ENCODE measurements at regions of chr1 and their contacts with region 1.

Region 1: GRCh38 chr1:66331657-66332547 is 202.1 kb upstream of the SGIP1 start:
- DNase-seq: no peak
- ATAC-seq: peak; percentile 13
- H3K4me3 ChIP-seq: peak overlapping the region; percentile 81
- H3K27ac ChIP-seq: peak overlapping the region; percentile 93
- H3K4me1 ChIP-seq: peaks cover 49% of the 10 kb centered on the region
- H3K27me3 ChIP-seq: no peaks in the 10 kb centered on the region
- CTCF ChIP-seq: no peak
- EP300 ChIP-seq: peak in 1 of 2 experiments; percentile 41; a peak in 1 of 4 replicates
- POLR2A ChIP-seq: peak; percentile 48; the same call in 1 of the 2 replicates
- RAD21 ChIP-seq: no peak

Region 2: GRCh38 chr1:66271216-66271903 is 60.5 kb before region 1 on chr1:
- CTCF ChIA-PET with region 1: interaction called, 9 read pairs
- POLR2A ChIA-PET with region 1: interaction called, 3 read pairs
- RAD21 ChIA-PET with region 1: interaction called, 4 read pairs
- SMC1A ChIA-PET with region 1: interaction called, 290 read pairs
- in situ Hi-C with region 1: no loop called
- intact Hi-C with region 1: loop called (anchors 1 kb)
- DNase-seq: no peak
- ATAC-seq: peak; percentile 58
- H3K4me3 ChIP-seq: no peak overlapping the region
- H3K27ac ChIP-seq: no peak overlapping the region
- H3K4me1 ChIP-seq: peaks cover 21% of the 10 kb centered on the region
- H3K27me3 ChIP-seq: no peaks in the 10 kb centered on the region
- CTCF ChIP-seq: no peak
- EP300 ChIP-seq: peak; percentile 38 to 77; a peak in 1 of 4 replicates
- POLR2A ChIP-seq: no peak
- RAD21 ChIP-seq: no peak

Region 3: GRCh38 chr1:66291047-66291868 is 40.6 kb before region 1 on chr1:
- CTCF ChIA-PET with region 1: interaction called, 6 read pairs
- POLR2A ChIA-PET with region 1: no interaction called
- RAD21 ChIA-PET with region 1: interaction called, 19 read pairs
- SMC1A ChIA-PET with region 1: interaction called, 290 read pairs
- in situ Hi-C with region 1: no loop called
- intact Hi-C with region 1: no loop called
- DNase-seq: no peak
- ATAC-seq: peak; percentile 49
- H3K4me3 ChIP-seq: no peak overlapping the region
- H3K27ac ChIP-seq: no peak overlapping the region
- H3K4me1 ChIP-seq: no peaks in the 10 kb centered on the region
- H3K27me3 ChIP-seq: no peaks in the 10 kb centered on the region
- CTCF ChIP-seq: no peak
- EP300 ChIP-seq: no peak
- POLR2A ChIP-seq: no peak
- RAD21 ChIP-seq: no peak

Region 4: GRCh38 chr1:66300972-66301451 is 30.9 kb before region 1 on chr1:
- CTCF ChIA-PET with region 1: interaction called, 6 read pairs
- POLR2A ChIA-PET with region 1: interaction called, 5 read pairs
- RAD21 ChIA-PET with region 1: interaction called, 10 read pairs
- SMC1A ChIA-PET with region 1: interaction called, 35 read pairs
- in situ Hi-C with region 1: no loop called
- intact Hi-C with region 1: no loop called
- DNase-seq: peak; percentile 53
- ATAC-seq: peak; percentile 92
- H3K4me3 ChIP-seq: peak overlapping the region; percentile 56; the same call in 1 of the 2 replicates
- H3K27ac ChIP-seq: peak overlapping the region; percentile 63
- H3K4me1 ChIP-seq: peaks cover 22% of the 10 kb centered on the region; the same call in 1 of the 2 replicates
- H3K27me3 ChIP-seq: no peaks in the 10 kb centered on the region
- CTCF ChIP-seq: no peak
- EP300 ChIP-seq: no peak
- POLR2A ChIP-seq: no peak
- RAD21 ChIP-seq: no peak

Region 5: GRCh38 chr1:66367369-66367768 is 35.5 kb after region 1 on chr1:
- CTCF ChIA-PET with region 1: no interaction called
- POLR2A ChIA-PET with region 1: interaction called, 6 read pairs
- RAD21 ChIA-PET with region 1: interaction called, 22 read pairs
- SMC1A ChIA-PET with region 1: interaction called, 23 read pairs
- in situ Hi-C with region 1: no loop called
- intact Hi-C with region 1: no loop called
- DNase-seq: no peak
- ATAC-seq: no peak
- H3K4me3 ChIP-seq: no peak overlapping the region
- H3K27ac ChIP-seq: no peak overlapping the region
- H3K4me1 ChIP-seq: peaks cover 37% of the 10 kb centered on the region
- H3K27me3 ChIP-seq: no peaks in the 10 kb centered on the region
- CTCF ChIP-seq: no peak
- EP300 ChIP-seq: no peak
- POLR2A ChIP-seq: no peak
- RAD21 ChIP-seq: no peak